ENCODE measurements at regions of chr10 and their contacts with region 1.

Region 1: DNA sequence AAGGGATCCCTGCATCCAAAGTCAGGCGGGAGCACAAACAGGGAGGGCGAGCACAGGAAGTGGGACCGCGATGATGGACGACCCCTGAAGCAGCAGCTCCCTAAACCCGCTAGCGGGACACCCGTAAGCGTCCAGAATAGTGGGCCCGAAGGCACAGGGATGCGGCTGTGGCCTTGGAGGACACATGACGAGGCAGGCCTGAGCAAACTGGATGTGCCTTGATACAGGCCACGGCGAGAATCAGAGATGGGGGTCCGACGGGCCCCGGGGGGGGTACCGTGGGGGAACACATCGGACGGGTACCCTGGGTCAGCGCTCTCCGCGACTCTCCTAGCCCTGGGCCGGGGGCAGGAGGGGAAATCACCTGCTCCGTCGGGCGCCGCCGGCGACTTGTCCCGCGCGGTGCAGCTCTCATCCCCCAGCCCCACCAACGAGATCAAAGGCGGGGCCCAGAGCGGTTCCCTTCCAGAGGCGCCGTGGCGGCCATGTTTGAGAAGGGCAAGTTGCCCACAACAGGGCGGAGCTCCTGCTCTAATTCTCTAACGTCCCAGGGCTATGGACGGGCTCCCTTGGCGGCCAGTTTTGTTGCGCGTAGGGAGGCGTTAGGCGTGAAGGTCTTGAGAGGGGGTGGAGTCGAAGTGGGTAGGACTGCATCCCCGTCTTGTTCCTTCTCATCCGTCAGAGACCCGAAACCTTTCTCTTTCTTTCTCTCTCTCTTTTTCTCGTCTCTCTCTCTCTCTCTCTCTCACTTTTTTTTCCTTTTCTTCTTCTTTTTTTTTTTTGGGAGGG is at the start of gene CUEDC2:
- DNase-seq: peak; percentile 94 to 96
- ATAC-seq: peak; percentile 96 to 97
- H3K4me3 ChIP-seq: peak within 1 kb of the TSS; percentile 72 to 100 (median 95)
- H3K27ac ChIP-seq: peak within 1 kb of the TSS; percentile 78 to 91 (median 88)
- H3K4me1 ChIP-seq: peaks cover 6 to 12% of the 10 kb centered on the region in 2 donors
- H3K27me3 ChIP-seq: peaks cover 6 to 11% (median 9%) of the 10 kb centered on the region in 3 donors
- CTCF ChIP-seq: no peak
- POLR2A ChIP-seq: peak; percentile 31 to 58
- total RNA-seq, gene CUEDC2: 51.6 to 83.1 (median 70.2) TPM

Region 2: GRCh38 chr10:102420810-102421644 is 11.3 kb before region 1 on chr10 and contains the start of gene FBXL15:
- in situ Hi-C with region 1: no loop called
- intact Hi-C with region 1: loop called (anchors 1 kb)
- DNase-seq: peak; percentile 96
- ATAC-seq: peak; percentile 90 to 94
- H3K4me3 ChIP-seq: peak within 1 kb of the TSS; percentile 82 to 92 (median 87)
- H3K27ac ChIP-seq: peak within 1 kb of the TSS; percentile 85 to 97 (median 94)
- H3K4me1 ChIP-seq: peaks cover 27 to 30% of the 10 kb centered on the region in 2 donors
- H3K27me3 ChIP-seq: peaks cover 19 to 29% (median 23%) of the 10 kb centered on the region in 3 donors
- CTCF ChIP-seq: peak in 2 of 5 experiments; percentile 22 to 41
- POLR2A ChIP-seq: peak; percentile 30 to 39
- total RNA-seq, gene FBXL15: 14.2 to 34.8 (median 21.0) TPM

Region 3: GRCh38 chr10:102450194-102450938 is 18.0 kb after region 1 on chr10:
- in situ Hi-C with region 1: no loop called
- intact Hi-C with region 1: loop called (anchors 1 kb)
- DNase-seq: peak; percentile 42 to 75
- ATAC-seq: peak; percentile 84 to 86
- H3K4me3 ChIP-seq: peak overlapping the region; percentile 42 to 98 (median 74)
- H3K27ac ChIP-seq: peak overlapping the region; percentile 75 to 93 (median 86)
- H3K4me1 ChIP-seq: peaks cover 10 to 16% of the 10 kb centered on the region in 2 donors
- H3K27me3 ChIP-seq: no peaks in the 10 kb centered on the region
- CTCF ChIP-seq: peak in 2 of 5 experiments; percentile 6 to 12
- POLR2A ChIP-seq: peak; percentile 59 to 72

Region 4: GRCh38 chr10:102461187-102462054 is 29.1 kb after region 1 on chr10:
- in situ Hi-C with region 1: no loop called
- intact Hi-C with region 1: loop called (anchors 1 kb)
- DNase-seq: peak; percentile 85 to 93
- ATAC-seq: peak; percentile 89 to 94
- H3K4me3 ChIP-seq: peak overlapping the region; percentile 54 to 77 (median 64)
- H3K27ac ChIP-seq: peak overlapping the region; percentile 44 to 74 (median 62)
- H3K4me1 ChIP-seq: peaks cover 15 to 19% of the 10 kb centered on the region in 2 donors
- H3K27me3 ChIP-seq: no peaks in the 10 kb centered on the region
- CTCF ChIP-seq: no peak
- POLR2A ChIP-seq: peak; percentile 70 to 71

Region 5: DNA sequence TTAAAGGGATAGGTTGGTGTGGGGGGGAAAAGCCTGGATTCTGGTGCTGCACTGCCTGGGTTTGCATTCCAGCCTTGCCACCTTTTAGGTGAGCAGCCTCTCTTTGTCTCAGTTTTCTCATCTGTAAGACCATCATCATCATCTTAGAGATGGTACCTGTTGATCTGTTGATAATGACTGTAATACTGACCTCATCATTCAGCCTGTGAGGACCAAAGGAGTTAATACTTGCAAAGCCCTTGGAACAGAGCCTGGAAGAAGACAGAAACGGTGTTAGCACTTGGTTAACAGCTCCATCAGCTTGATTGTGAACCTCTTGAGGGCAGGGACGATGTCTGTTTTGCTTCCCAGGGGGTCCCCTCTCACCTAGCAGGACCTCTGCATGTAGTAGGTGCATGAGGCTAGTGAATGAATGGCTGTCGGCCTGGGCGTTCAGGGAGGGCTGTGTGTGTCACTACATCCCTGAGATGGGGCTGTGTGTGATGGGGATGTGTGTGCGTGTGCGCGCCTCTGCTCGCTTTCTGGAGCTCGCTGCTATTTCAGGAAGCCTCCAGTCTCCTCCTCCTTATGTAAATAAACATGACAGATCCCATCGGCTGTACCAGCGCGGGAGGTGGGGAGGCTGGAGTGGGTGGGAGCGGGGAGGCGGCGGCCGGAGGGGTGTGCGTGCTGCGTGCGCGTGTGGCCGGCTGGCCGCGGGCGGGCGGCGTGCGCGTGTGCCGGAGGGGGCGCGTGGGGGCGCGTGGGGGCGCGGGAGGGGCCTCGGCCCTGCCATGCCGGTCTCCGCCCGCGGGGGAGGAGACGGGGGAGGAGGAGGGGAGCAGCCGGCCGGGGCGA is 1122.3 kb after region 1 on chr10:
- in situ Hi-C with region 1: no loop called
- intact Hi-C with region 1: no loop called
- DNase-seq: peak; percentile 63 to 75
- ATAC-seq: peak; percentile 60 to 67
- H3K4me3 ChIP-seq: peak overlapping the region; percentile 57 to 63 (median 62)
- H3K27ac ChIP-seq: peak overlapping the region; percentile 83 to 94 (median 89)
- H3K4me1 ChIP-seq: peaks cover 41 to 51% of the 10 kb centered on the region in 2 donors
- H3K27me3 ChIP-seq: no peaks in the 10 kb centered on the region
- CTCF ChIP-seq: no peak
- POLR2A ChIP-seq: peak; percentile 58 to 64

Measured in gastrocnemius medialis (tissue), 4 donors.